Ascending aorta (tissue), 2 donors: ENCODE measurements at regions of chr19 and their contacts with region 1.

Region 1: DNA sequence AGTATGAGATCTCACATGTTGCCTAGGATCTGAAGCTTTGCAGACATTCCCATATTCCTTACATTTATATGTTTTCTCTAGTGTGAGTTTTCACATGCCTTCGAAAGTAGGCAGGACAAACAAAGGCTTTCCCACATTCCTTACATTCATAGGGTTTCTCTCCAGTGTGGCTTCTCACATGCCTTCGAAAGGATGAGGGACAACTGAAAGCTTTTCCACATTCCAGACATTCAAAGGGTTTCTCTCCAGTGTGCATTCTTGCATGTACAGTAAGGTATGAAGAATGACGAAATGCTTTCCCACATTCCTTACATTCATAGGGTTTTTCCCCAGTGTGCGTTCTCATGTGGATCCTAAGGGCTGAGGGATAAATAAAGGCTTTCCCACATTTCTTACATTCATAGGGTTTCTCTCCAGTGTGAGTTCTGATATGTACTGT is 14.2 kb downstream of the ZNF699 start:
- DNase-seq: no peak
- H3K4me3 ChIP-seq: no peak overlapping the region
- H3K27ac ChIP-seq: no peak overlapping the region
- H3K4me1 ChIP-seq: no peaks in the 10 kb centered on the region
- H3K27me3 ChIP-seq: no peaks in the 10 kb centered on the region
- CTCF ChIP-seq: no peak

Region 2: DNA sequence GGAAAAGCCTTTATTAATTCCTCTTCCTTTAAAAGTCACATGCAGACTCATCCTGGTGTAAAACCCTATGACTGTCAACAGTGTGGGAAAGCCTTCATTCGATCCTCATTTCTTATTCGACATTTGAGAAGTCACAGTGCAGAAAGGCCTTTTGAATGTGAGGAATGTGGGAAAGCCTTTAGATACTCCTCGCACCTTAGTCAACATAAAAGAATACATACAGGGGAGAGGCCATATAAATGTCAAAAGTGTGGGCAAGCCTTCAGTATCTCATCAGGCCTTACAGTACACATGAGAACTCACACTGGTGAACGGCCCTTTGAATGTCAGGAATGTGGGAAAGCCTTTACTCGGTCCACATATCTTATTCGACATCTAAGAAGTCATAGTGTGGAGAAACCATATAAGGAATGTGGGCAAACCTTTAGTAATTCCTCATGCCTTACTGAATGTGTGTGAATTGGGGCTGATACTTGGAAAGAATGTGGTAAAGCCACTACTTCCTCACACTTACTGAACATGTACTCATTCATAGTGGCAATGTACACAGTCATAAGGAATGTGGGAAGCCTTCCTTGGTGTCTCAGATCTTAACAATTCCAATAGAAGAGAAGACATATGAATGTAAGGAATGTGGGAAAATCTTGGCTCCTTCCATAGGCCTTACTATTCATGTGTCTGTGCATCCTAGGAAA is 47.3 kb after region 1 on chr19:
- intact Hi-C with region 1: loop called (anchors 10 kb)
- DNase-seq: no peak
- H3K4me3 ChIP-seq: peak overlapping the region in 1 of 2 donors; percentile 30
- H3K27ac ChIP-seq: no peak overlapping the region
- H3K4me1 ChIP-seq: no peaks in the 10 kb centered on the region
- H3K27me3 ChIP-seq: no peaks in the 10 kb centered on the region
- CTCF ChIP-seq: no peak